Endothelial cell of umbilical vein (primary cell): ENCODE measurements at regions of chr14 and their contacts with region 1.

Region 1: GRCh38 chr14:85528080-85528896 is 1.7 kb upstream of the FLRT2 start:
- DNase-seq: peak; percentile 94
- H3K4me3 ChIP-seq: peak overlapping the region; percentile 38 to 94 (median 93)
- H3K27ac ChIP-seq: peak overlapping the region; percentile 93
- H3K4me1 ChIP-seq: peaks cover 19% of the 10 kb centered on the region
- H3K27me3 ChIP-seq: no peaks in the 10 kb centered on the region
- CTCF ChIP-seq: peak; percentile 52 to 65
- POLR2A ChIP-seq: peak; percentile 39

Region 2: DNA sequence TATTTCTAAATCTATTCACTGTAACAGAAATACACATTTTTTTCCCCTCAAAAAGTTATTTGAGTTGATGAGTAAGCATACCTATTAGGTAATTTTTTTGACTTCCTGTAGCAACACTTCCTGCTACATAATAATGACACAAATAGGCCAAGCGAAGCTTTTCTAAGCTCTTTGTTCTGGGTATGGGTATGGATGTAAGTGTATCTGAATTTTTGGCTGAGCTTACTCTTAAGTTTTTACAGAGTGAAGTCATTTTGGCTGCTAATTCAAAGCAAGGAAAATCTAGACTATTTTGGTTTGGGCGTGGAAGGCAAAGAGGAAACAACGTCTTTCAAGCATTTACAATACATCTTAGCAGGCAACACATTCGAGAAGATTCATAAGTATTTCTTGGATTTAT is 1204.3 kb before region 1 on chr14:
- CTCF ChIA-PET with region 1: no interaction called
- POLR2A ChIA-PET with region 1: no interaction called
- dilution Hi-C with region 1: no loop called
- intact Hi-C with region 1: loop called (anchors 5 kb)
- DNase-seq: peak; percentile 57
- H3K4me3 ChIP-seq: no peak overlapping the region
- H3K27ac ChIP-seq: peak overlapping the region; percentile 64
- H3K4me1 ChIP-seq: peaks cover 16% of the 10 kb centered on the region
- H3K27me3 ChIP-seq: no peaks in the 10 kb centered on the region
- CTCF ChIP-seq: no peak
- POLR2A ChIP-seq: no peak

Region 3: DNA sequence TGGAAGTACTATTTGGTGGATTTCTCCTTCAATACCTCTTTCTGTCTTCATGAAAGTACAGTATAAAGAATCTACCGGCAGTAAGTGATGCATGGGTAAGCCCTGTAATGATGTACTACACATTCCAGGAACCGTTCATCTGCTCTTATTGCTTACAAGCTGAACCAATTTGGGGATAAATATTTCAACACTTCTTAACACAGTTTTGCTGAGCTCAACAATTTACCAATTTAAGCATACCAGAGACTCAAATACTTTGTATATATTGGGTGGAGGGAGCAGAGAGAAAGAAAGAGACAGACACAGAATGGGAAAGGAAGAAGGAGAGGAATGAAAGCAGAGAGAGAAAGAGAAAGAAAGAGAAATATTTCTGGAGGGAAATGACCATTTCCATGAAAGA is 819.4 kb before region 1 on chr14:
- CTCF ChIA-PET with region 1: no interaction called
- POLR2A ChIA-PET with region 1: no interaction called
- dilution Hi-C with region 1: no loop called
- intact Hi-C with region 1: loop called (anchors 5 kb)
- DNase-seq: no peak
- H3K4me3 ChIP-seq: no peak overlapping the region
- H3K27ac ChIP-seq: no peak overlapping the region
- H3K4me1 ChIP-seq: peaks cover 5% of the 10 kb centered on the region
- H3K27me3 ChIP-seq: no peaks in the 10 kb centered on the region
- CTCF ChIP-seq: no peak
- POLR2A ChIP-seq: no peak

Region 4: DNA sequence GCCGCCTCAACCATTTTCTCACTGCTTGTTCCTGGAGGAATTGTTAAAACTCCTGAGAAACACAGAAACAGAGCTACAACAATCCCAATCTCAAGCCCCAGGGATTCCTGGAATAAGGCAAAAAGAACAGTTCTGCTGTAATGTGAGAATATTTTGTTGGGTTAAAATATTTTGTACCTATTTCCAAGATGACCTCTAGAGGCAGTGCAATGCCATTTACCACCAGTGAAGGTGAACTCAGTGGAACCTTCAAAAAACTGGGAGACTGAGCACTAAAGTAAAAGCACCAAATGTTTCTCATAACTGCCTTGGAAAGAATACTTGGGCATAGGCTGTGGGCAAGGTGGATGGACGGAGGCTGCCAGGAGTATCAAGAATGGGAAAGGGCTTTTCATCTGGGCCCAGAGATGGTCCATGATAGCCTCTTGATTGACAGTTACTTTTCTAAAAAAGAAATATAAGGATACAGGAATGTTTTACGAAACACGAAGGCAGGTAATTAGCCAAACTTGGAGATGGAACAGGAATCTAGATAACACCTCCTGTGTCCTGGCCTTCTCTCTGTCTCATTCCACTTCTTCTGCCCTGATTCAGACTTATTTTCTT is 332.3 kb before region 1 on chr14:
- CTCF ChIA-PET with region 1: interaction called, 9 read pairs
- POLR2A ChIA-PET with region 1: no interaction called
- dilution Hi-C with region 1: no loop called
- intact Hi-C with region 1: loop called (anchors 1 kb)
- DNase-seq: peak; percentile 18
- H3K4me3 ChIP-seq: no peak overlapping the region
- H3K27ac ChIP-seq: no peak overlapping the region
- H3K4me1 ChIP-seq: no peaks in the 10 kb centered on the region
- H3K27me3 ChIP-seq: no peaks in the 10 kb centered on the region
- CTCF ChIP-seq: peak; percentile 38 to 48
- POLR2A ChIP-seq: no peak

Region 5: DNA sequence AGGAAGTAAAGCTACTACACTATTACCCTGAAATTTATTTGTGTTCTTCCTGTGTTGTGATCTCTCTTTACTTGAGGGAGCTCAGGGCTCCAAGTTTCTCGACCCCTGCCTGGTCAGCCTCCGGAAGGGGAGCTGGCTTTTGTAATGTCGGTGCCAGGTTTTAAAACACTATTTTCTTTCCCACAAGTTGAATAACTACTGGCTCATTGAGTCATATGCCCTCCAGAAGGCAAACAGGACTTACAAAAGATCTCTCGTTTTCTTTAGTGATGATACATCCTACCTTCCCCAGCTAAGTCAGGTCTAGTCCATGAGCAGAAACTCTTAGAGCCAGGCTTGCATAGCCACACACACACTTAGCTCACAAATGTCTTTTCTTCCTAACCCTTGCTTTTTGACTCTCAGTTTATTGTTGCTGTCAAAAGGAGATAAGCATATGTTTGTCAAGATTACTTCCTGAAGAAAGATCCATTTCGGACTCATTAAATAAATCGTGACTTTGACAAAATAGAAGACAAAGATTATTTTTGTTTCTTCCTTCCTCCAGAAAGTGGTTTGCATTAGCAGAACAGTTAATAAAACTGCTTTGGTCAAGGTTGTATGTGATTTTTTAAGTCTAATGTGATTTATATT is 208.2 kb before region 1 on chr14:
- CTCF ChIA-PET with region 1: interaction called, 14 read pairs
- POLR2A ChIA-PET with region 1: interaction called, 5 read pairs
- dilution Hi-C with region 1: no loop called
- intact Hi-C with region 1: loop called (anchors 1 kb)
- DNase-seq: peak; percentile 95
- H3K4me3 ChIP-seq: peak overlapping the region in 1 of 3 experiments; percentile 35
- H3K27ac ChIP-seq: peak overlapping the region; percentile 68
- H3K4me1 ChIP-seq: peaks cover 25% of the 10 kb centered on the region
- H3K27me3 ChIP-seq: no peaks in the 10 kb centered on the region
- CTCF ChIP-seq: no peak
- POLR2A ChIP-seq: peak; percentile 35

Region 6: DNA sequence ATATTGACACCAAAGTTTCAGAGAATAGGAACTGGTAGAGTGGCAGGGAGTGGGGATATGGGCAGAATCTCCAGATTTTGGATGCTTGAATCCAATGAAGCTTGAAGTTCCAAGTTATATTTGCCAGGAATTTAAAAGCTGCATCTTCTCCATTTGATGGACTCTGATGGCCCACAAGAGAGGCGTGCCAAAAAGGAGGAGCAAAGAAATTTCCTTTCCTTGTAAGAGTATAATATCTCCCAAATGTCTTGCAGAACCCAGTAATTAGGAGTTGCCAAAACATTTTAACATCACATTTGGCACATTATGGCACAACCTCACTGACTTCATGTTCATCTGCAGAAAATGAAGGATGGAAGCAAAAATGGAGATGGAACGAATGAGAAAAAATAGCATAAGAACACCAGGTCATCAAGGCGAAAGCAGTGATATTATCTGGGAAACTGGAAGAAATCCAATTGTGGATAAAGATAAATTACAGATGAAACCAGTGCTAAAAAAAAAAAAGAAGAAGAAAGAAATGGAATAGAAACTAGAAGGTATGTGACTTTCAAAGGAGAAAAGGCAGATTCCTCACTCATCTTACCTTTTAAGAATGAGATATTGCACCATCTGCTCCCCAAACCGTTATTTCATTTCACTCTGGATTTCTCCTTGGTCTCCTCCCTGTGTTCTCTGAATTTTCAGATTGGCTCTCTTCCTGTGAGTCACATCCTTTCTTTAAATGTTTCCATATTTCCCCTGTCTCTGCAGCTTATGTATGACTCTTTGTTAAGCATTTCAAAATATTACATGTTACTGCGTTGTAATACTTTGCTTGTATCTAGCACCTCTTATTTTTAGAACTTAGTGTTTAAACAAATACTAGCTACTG is 11.8 kb before region 1 on chr14:
- CTCF ChIA-PET with region 1: interaction called, 11 read pairs
- POLR2A ChIA-PET with region 1: interaction called, 6 read pairs
- dilution Hi-C with region 1: no loop called
- intact Hi-C with region 1: loop called (anchors 1 kb)
- DNase-seq: peak; percentile 85
- H3K4me3 ChIP-seq: peak overlapping the region in 2 of 3 experiments; percentile 51 to 67
- H3K27ac ChIP-seq: peak overlapping the region; percentile 69
- H3K4me1 ChIP-seq: peaks cover 21% of the 10 kb centered on the region
- H3K27me3 ChIP-seq: no peaks in the 10 kb centered on the region
- CTCF ChIP-seq: no peak
- POLR2A ChIP-seq: peak; percentile 65